H1 (cell line): ENCODE measurements at regions of chr6 and their contacts with region 1.

Region 1: DNA sequence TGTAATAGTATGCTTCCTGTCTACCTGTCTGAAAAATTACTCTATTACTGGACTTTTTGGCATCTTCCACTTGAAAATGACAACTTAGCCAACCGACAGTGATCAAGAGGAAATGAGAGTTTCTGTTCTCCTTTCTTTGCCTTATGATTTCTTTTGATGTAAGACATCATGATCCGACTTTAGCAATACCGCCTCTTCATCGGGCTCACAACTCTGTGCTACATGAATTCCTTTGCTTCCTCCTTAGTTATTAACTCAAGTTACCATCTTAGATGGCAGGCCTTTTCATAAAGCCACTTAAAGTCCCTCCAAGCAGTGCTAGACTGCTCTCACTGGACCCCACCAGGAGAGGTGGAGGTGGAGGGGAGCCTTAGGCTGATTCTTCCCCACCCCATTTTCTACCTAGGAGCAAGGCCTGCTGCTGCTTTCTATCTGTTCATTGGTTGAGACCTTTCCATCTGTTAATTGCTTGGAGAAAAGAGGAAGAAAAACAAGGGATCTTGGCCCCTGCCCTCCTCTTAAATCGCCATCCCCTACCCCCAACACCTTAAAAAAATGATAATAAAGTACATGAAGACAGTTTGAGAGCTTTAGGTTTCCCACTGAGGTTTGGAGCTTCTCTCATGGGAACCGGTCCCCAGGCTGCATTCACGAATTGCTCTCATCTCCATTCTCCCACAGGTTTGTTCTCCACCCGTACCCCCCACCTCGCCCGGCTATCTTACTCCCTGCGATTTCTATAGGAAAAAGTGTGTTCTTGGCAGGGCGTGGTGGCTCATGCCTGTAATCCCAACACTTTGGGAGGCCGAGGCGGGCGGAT is 21.6 kb upstream of the MCM3 start:
- DNase-seq: no peak
- H3K4me3 ChIP-seq: no peak overlapping the region
- H3K27ac ChIP-seq: no peak overlapping the region
- H3K4me1 ChIP-seq: no peaks in the 10 kb centered on the region; a peak in 2 of 7 replicates
- H3K27me3 ChIP-seq: no peaks in the 10 kb centered on the region
- CTCF ChIP-seq: no peak
- EP300 ChIP-seq: no peak
- POLR2A ChIP-seq: no peak
- RAD21 ChIP-seq: no peak

Region 2: DNA sequence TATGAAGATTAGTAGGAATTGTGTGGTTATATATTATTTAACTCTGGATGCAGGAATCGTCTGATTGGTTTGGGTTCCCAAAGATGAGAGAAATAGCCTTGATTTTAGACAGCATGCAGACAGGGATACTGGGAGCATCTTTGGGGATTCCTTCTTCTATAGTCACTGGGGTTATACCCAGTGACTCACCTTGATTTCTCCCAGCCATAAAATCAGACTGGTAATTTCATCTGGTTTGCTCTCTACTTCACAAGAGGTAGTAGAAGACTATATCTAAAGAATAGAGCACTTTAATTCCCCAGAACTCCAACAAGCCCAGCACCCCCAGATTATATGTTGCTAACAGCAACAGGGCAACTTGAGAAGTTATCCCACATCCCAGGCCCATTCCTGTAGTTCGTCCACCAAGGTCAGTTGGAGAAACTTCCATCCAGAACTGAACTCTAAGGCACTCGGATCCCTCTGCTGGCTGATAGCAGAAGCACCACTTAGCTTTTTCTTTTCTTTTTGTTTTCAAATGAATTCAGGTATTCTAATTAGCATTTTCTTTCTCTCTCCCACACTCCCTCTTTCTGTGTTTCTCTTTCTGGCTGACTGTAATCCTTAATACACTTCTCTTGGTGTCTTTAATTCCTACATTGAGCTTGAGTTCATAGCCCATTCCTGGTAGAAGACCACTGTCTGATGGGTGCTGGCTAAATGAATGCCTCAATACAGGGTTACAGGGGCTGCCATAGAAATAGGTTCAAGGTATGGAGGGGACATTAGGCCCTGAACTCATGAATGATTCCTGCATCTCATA is 93.6 kb after region 1 on chr6:
- CTCF ChIA-PET with region 1: interaction called, 16 read pairs
- POLR2A ChIA-PET with region 1: no interaction called
- DNase-seq: no peak
- H3K4me3 ChIP-seq: no peak overlapping the region
- H3K27ac ChIP-seq: no peak overlapping the region
- H3K4me1 ChIP-seq: peaks cover 0 to 4% (median 3%) of the 10 kb centered on the region in 4 experiments; a peak in 3 of 7 replicates
- H3K27me3 ChIP-seq: no peaks in the 10 kb centered on the region
- CTCF ChIP-seq: peak; percentile 35 to 87 (median 82)
- EP300 ChIP-seq: no peak
- POLR2A ChIP-seq: no peak
- RAD21 ChIP-seq: peak; percentile 89 to 91